T-cell (primary cell): ENCODE measurements at regions of chrX and their contacts with region 1.

Region 1: GRCh38 chrX:17736856-17737706 is at the start of gene SCML1:
- DNase-seq: peak; percentile 63 to 88 (median 77)
- ATAC-seq: peak; percentile 75 to 85 (median 84)
- H3K4me3 ChIP-seq: peak within 1 kb of the TSS; percentile 60 to 80
- H3K4me3 Mint-ChIP-seq: peak within 1 kb of the TSS; percentile 86 to 98 (median 93)
- H3K27ac ChIP-seq: peak within 1 kb of the TSS; percentile 64
- H3K27ac Mint-ChIP-seq: peak within 1 kb of the TSS; percentile 89 to 93
- H3K4me1 ChIP-seq: peaks cover 8 to 21% of the 10 kb centered on the region in 2 experiments
- H3K4me1 Mint-ChIP-seq: peaks cover 22 to 34% (median 26%) of the 10 kb centered on the region in 3 donors
- H3K27me3 ChIP-seq: peaks cover 0 to 9% of the 10 kb centered on the region in 2 experiments
- H3K27me3 Mint-ChIP-seq: peaks cover 0 to 2% of the 10 kb centered on the region in 2 donors
- total RNA-seq, gene SCML1: 13.6 to 33.0 (median 23.0) TPM

Region 2: GRCh38 chrX:17613979-17614569 is 123.0 kb before region 1 on chrX:
- CTCF ChIA-PET with region 1: no interaction called
- POLR2A ChIA-PET with region 1: no interaction called
- DNase-seq: peak in 1 of 35 experiments; percentile 1
- ATAC-seq: no peak
- H3K4me3 ChIP-seq: no peak overlapping the region
- H3K4me3 Mint-ChIP-seq: no peak overlapping the region
- H3K27ac ChIP-seq: no peak overlapping the region
- H3K27ac Mint-ChIP-seq: no peak overlapping the region
- H3K4me1 ChIP-seq: peaks cover 0 to 2% of the 10 kb centered on the region in 2 experiments
- H3K4me1 Mint-ChIP-seq: peaks cover 0 to 23% (median 4%) of the 10 kb centered on the region in 3 donors
- H3K27me3 ChIP-seq: no peaks in the 10 kb centered on the region
- H3K27me3 Mint-ChIP-seq: peaks cover 0 to 15% of the 10 kb centered on the region in 2 donors

Region 3: GRCh38 chrX:17986440-17986839 is 249.4 kb after region 1 on chrX:
- CTCF ChIA-PET with region 1: no interaction called
- POLR2A ChIA-PET with region 1: interaction called in 1 of 2 experiments, 11 read pairs
- DNase-seq: no peak
- ATAC-seq: no peak
- H3K4me3 ChIP-seq: no peak overlapping the region
- H3K4me3 Mint-ChIP-seq: peak overlapping the region in 1 of 3 donors; percentile 38
- H3K27ac ChIP-seq: no peak overlapping the region
- H3K27ac Mint-ChIP-seq: no peak overlapping the region
- H3K4me1 ChIP-seq: peaks cover 11 to 12% of the 10 kb centered on the region in 2 experiments
- H3K4me1 Mint-ChIP-seq: peaks cover 33 to 36% (median 34%) of the 10 kb centered on the region in 3 donors
- H3K27me3 ChIP-seq: no peaks in the 10 kb centered on the region
- H3K27me3 Mint-ChIP-seq: no peaks in the 10 kb centered on the region